ENCODE measurements at regions of chr11 and their contacts with region 1.

Region 1: DNA sequence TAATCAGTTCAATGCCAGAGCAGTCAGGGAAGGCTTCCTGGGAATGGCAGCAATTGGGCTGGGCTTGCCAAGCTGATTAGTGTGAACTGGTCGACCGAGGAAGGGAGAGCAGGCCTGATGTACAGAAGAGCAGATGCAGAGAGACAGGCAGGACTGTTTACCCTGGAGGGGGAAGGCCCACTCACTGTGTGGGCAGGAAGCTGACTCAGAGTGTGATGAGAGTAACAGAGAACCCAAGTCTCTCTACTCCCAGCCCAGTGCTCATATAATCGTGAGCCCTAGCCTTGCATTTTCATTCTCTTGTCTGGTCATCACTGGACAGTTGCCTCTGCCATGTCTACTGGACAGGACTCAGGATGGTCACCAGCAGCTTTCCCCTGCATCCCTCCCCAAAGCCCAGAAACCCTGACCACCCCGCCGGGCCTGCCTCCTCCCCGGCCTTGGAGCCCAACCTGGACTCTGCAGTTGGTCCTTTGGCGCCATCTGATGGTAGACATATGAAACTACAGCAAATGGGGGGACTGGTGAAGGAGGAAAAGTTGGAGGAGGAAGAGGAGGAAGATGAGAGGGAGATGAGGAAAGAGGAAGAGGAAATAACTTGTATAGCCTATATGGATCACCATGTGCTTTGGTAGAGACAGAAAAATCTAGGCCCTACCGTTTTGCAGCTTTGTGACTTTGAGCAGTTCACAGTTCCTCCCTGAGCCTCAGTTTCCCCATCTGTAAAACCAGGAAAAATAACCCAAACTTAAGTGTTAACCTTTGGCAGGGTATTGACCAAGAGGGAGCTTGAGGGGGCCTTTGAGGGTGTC is 43.4 kb upstream of the PRDM11 start:
- DNase-seq: peak; percentile 56

Region 2: DNA sequence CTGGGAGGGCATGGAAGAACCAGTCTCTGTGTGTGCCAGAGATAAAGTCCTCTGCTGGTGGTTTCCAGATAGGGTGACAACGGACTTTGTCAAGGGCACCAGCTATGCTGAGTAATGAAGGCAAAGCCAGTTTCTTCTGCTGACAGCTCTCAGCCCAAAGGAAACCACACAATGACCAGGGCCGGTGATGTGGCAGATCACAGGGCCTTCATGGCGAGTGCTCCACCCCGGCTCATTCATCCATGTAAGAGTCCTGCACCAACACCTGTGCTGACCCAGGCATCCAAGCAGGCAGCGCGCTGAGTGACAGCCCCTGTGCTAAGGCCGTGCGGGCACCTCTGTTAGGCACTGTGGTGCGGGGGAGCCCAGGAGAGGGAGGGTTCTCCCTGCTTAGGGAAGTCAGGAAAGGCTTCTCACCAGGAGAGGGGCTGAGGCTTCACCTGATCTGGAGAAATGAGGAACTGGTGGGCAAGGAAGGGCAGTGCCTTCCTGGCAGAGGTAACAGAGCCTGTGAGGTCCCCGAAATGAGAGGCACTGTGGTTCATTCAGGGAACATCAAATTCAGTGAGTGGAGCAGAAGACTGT is 186.1 kb before region 1 on chr11:
- in situ Hi-C with region 1: no loop called
- DNase-seq: no peak

Region 3: DNA sequence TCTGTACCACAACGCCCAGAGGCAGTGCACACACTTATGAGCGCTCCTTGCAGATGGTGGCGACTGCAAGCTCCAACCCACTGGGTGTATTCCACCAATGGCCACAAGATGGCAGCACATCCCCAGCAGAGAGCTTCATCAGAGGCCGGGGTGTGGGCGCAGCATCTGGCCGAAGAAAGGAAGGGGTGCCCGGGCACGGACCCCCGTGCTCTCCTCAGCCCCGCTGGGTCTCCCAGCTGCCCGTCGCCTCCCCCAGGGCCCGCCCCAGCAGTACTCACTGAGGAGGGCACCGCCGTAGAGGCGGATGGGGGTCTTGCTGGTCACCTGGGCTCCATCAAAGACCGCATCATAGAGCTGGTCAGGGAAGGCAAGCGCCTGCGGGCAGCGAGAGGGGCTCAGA is 166.5 kb before region 1 on chr11:
- in situ Hi-C with region 1: loop called (anchors 25 kb)
- DNase-seq: peak; percentile 68

Region 4: DNA sequence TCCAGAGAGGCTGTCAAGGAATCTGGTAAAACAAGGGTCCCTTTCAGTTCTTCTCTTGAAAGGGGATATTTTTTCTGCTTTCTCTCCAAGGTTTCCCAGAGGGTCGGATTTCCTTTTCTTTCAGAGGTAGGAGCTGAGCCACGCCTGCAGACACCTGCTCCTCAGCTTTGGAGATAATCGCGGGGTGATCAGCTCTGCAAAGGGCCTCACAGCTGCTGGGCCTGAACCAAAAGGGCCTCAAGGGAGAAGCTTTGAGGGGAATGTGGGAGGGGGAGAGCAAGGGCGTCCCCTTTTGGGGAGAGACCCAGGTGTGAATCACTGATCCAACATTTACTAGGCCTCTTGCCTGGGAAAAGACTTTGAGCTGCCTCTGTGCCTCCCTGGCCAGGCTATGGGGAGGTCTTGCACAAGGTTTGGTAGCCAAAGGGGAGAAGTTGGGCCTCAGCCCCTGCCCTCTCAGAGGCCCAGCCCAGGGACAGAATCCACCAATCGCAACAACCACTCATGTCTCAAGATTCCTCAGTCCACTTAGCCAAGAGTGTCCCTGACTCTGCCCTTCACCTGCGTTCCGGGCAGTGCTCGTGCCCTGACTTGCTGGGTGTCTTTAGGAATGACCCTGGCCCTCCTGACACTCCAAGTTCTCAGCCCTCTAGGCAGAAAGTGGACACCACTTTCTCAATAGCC is 138.3 kb before region 1 on chr11:
- in situ Hi-C with region 1: no loop called
- DNase-seq: no peak

Region 5: GRCh38 chr11:45339729-45340519 is 236.9 kb after region 1 on chr11:
- in situ Hi-C with region 1: loop called (anchors 25 kb)
- DNase-seq: peak; percentile 84

Region 6: GRCh38 chr11:45405916-45406670 is 303.1 kb after region 1 on chr11:
- in situ Hi-C with region 1: no loop called
- DNase-seq: peak; percentile 13

Measured in ACHN (cell line).